Endothelial cell of umbilical vein (primary cell): ENCODE measurements at regions of chr9 and their contacts with region 1.

Region 1: DNA sequence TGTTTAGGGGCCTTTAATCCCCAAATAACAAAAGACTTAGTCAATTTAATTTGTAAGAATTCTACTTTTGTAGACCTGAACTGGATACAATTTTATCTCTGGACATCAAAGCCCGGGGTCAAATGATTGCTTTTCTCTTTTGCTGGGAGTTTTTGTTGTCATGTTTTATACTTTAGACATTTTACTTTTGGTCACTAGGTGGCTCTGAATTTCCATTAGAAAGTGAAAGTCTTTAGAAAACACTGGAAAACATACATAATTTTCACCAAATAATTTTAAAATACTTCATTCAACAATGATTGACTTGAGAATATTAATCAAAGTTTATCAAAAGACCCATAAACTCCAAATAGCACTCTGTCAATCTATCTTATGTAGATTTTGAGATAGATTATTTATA is 2.8 kb upstream of the PCA3 start:
- DNase-seq: peak; percentile 24
- H3K4me3 ChIP-seq: no peak overlapping the region
- H3K27ac ChIP-seq: no peak overlapping the region
- H3K4me1 ChIP-seq: no peaks in the 10 kb centered on the region
- H3K27me3 ChIP-seq: peaks cover 9 to 10% of the 10 kb centered on the region in 2 experiments
- CTCF ChIP-seq: no peak
- POLR2A ChIP-seq: no peak

Region 2: GRCh38 chr9:76835571-76836283 is 74.3 kb after region 1 on chr9:
- CTCF ChIA-PET with region 1: no interaction called
- POLR2A ChIA-PET with region 1: no interaction called
- dilution Hi-C with region 1: no loop called
- intact Hi-C with region 1: no loop called
- DNase-seq: no peak
- H3K4me3 ChIP-seq: no peak overlapping the region
- H3K27ac ChIP-seq: no peak overlapping the region
- H3K4me1 ChIP-seq: no peaks in the 10 kb centered on the region
- H3K27me3 ChIP-seq: no peaks in the 10 kb centered on the region
- CTCF ChIP-seq: no peak
- POLR2A ChIP-seq: no peak

Region 3: GRCh38 chr9:76987594-76988200 is 226.2 kb after region 1 on chr9:
- CTCF ChIA-PET with region 1: interaction called, 11 read pairs
- POLR2A ChIA-PET with region 1: no interaction called
- dilution Hi-C with region 1: no loop called
- intact Hi-C with region 1: no loop called
- DNase-seq: peak; percentile 15
- H3K4me3 ChIP-seq: no peak overlapping the region
- H3K27ac ChIP-seq: no peak overlapping the region
- H3K4me1 ChIP-seq: no peaks in the 10 kb centered on the region
- H3K27me3 ChIP-seq: peaks cover 7 to 10% of the 10 kb centered on the region in 2 experiments
- CTCF ChIP-seq: peak; percentile 17 to 23
- POLR2A ChIP-seq: no peak

Region 4: DNA sequence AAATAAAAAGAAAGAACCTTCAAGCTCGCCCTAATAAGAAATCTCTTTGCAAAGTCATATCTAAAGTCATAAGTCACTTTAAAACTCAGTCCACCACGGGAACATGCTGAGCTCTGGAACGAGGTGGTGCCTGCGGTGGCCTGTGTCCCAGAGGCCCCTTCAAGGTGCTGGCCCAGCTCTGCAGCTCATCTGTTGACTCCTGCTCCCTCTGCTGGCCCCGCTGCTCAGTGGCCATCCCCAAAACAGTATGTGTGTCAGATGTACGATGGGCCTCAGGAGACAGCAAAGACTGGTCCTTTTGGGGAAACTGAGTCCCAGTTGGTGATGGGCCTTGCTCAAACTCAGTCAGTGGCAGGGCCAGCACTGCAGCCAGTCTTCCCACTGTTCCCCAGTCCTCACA is 235.3 kb after region 1 on chr9:
- CTCF ChIA-PET with region 1: interaction called, 10 read pairs
- POLR2A ChIA-PET with region 1: no interaction called
- dilution Hi-C with region 1: no loop called
- intact Hi-C with region 1: no loop called
- DNase-seq: no peak
- H3K4me3 ChIP-seq: no peak overlapping the region
- H3K27ac ChIP-seq: no peak overlapping the region
- H3K4me1 ChIP-seq: no peaks in the 10 kb centered on the region
- H3K27me3 ChIP-seq: peaks cover 2 to 7% of the 10 kb centered on the region in 2 experiments
- CTCF ChIP-seq: peak; percentile 23 to 61
- POLR2A ChIP-seq: no peak

Region 5: GRCh38 chr9:77011973-77012821 is 250.7 kb after region 1 on chr9:
- CTCF ChIA-PET with region 1: interaction called, 4 read pairs
- POLR2A ChIA-PET with region 1: no interaction called
- dilution Hi-C with region 1: no loop called
- intact Hi-C with region 1: loop called (anchors 2 kb)
- DNase-seq: peak; percentile 54
- H3K4me3 ChIP-seq: no peak overlapping the region
- H3K27ac ChIP-seq: no peak overlapping the region
- H3K4me1 ChIP-seq: peaks cover 7% of the 10 kb centered on the region
- H3K27me3 ChIP-seq: peaks cover 70 to 91% of the 10 kb centered on the region in 2 experiments
- CTCF ChIP-seq: peak; percentile 87 to 90
- POLR2A ChIP-seq: no peak

Region 6: GRCh38 chr9:77149879-77150278 is 388.4 kb after region 1 on chr9:
- CTCF ChIA-PET with region 1: interaction called, 12 read pairs
- POLR2A ChIA-PET with region 1: no interaction called
- dilution Hi-C with region 1: no loop called
- intact Hi-C with region 1: loop called (anchors 2 kb)
- DNase-seq: no peak
- H3K4me3 ChIP-seq: no peak overlapping the region
- H3K27ac ChIP-seq: no peak overlapping the region
- H3K4me1 ChIP-seq: peaks cover 2% of the 10 kb centered on the region
- H3K27me3 ChIP-seq: peaks cover 8 to 28% of the 10 kb centered on the region in 2 experiments
- CTCF ChIP-seq: no peak
- POLR2A ChIP-seq: no peak

Region 7: DNA sequence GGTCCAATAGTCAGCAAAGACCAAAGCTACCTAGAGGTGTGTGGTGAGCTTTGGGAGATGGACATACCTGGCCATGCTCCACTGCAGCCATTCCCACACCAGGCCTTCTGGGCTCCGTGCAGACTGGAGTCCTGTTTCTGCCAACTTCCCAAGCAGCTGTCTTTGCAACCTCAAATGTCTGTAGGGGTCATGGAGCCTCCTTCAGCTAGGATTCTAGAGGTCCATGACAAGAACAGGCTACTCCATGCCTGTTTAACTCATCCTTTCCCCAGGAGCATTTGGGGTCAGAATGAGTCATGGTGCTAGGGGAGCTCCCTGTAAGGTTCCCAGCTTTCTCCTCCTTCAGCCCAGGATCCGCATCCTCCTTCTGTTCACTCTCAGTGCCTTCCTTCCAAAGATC is 433.0 kb after region 1 on chr9:
- CTCF ChIA-PET with region 1: no interaction called
- POLR2A ChIA-PET with region 1: no interaction called
- dilution Hi-C with region 1: no loop called
- intact Hi-C with region 1: no loop called
- DNase-seq: no peak
- H3K4me3 ChIP-seq: no peak overlapping the region
- H3K27ac ChIP-seq: no peak overlapping the region
- H3K4me1 ChIP-seq: no peaks in the 10 kb centered on the region
- H3K27me3 ChIP-seq: no peaks in the 10 kb centered on the region
- CTCF ChIP-seq: no peak
- POLR2A ChIP-seq: no peak